Activated CD8-positive, alpha-beta memory T cell treated with anti-CD3 and anti-CD28 coated beads, Interleukin-2, amount 10 ng/mL, durations not matched to agents 7 days and 5 days (primary cell): ENCODE measurements at regions of chr1 and their contacts with region 1.

Region 1: DNA sequence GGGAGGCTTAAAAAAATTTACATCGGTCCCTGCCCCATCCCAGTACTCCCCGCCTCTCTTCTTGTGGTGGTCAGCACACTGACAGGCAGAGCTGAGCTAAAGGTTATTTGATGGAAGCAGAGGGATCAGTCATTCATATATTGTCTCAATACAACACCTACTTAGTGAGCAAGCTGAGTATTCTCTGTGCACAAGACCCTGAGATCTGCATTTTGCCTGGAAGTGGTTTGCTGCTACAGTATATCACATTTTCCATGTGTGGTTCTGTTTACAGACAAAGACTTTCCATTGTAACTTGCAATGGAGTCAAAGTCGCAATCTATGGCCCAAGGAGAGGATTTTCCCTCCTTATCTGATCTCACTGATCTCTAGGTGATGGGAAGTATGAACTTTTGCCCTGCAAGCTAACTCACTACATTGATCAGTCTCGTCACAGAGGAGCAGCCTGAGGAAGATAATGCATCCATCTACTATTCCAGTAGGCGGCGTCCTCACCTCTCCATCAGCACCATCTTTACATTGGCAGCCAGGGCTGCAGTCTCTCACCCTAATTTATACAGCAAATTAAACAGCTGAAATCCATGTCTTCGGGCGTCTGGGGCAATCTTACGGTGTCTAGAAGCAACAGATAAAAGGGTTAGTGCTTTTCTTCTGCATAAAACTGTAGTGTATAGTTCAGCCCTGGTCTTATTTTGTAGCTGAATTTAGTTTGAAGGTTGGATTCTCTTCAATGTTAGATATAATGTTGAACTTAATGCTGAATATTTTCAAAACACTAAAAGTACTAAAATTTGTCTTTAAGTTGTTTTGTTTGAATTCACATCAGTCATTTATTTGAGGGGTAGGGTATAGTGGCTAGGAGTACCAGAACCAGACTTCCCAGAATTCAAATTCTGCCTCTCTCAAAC is 3.2 kb upstream of the TRAF5 start:
- DNase-seq: peak; percentile 84
- ATAC-seq: peak; percentile 63
- H3K4me3 Mint-ChIP-seq: no peak overlapping the region
- H3K27ac Mint-ChIP-seq: no peak overlapping the region
- H3K4me1 Mint-ChIP-seq: peaks cover 43% of the 10 kb centered on the region
- H3K27me3 Mint-ChIP-seq: no peaks in the 10 kb centered on the region

Region 2: DNA sequence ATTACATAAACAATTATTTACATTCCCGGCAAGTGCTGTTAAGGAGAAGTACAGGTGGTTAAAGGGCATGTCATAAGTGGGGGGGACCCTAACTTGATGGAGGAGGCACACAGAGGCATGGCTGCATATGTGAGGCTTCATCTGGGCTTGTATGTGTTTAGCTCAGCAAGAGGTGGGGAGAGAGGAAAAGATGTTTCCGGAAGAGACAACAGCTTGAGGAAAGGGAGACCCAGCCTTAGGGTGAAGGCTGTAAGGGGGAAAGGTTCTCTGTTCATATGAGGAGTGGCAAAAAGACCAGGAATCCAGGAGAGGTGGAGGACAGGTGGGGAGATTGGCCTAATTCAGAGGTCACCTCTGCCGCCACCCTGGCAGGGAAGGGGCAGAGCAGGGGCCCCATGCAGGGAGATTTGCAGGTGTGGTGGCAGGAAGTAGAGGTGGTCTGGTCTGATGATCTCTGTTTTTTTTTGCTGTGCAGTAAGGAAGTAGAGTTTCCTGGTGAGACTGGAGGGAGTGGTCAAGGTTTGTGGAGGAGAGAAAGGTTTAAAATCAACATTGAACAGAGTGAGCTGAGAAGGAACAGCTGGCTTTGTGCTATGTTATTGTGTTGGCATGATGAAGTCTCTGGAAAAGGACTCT is 12.2 kb after region 1 on chr1:
- CTCF ChIA-PET with region 1: interaction called, 31 read pairs
- DNase-seq: peak; percentile 59
- ATAC-seq: peak; percentile 75
- H3K4me3 Mint-ChIP-seq: peak overlapping the region; percentile 64
- H3K27ac Mint-ChIP-seq: peak overlapping the region; percentile 92
- H3K4me1 Mint-ChIP-seq: peaks cover 82% of the 10 kb centered on the region
- H3K27me3 Mint-ChIP-seq: no peaks in the 10 kb centered on the region

Region 3: DNA sequence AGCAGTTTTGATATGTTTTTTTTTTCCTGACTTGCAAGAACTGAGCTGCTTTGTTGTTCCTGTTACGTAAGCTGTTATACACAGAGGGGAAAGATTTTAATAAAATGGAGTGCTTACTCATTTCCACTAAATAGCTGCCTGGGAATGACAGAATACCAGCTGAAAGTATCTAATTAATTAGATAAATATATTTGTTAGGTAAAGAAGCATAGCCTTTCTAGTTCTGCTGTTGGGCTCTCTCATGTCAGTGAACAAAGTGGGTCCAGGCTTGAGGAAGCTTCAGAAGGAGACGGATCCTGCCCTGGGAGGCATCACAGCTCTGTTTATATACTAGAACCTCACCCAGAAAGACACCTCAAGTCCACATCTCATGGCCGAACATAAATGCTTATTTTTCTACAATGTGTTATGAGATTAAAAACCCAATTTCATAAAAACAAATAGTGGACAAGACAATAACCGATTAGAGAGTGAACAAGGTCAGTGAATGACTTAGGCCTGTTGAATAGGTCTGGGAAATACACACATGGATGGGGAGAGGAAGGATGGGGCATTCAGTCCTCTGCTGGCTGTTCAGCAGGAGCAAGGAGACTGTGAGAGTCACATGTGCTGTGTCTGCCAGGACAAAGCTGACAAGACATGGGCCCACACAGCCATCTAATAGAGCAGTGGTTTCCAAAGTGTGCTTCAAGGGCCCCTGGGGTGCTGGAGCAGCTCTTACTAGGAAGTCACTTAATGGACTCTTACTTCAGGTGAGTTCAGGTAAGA is 23.9 kb after region 1 on chr1:
- CTCF ChIA-PET with region 1: interaction called, 13 read pairs
- DNase-seq: no peak
- ATAC-seq: no peak
- H3K4me3 Mint-ChIP-seq: no peak overlapping the region
- H3K27ac Mint-ChIP-seq: no peak overlapping the region
- H3K4me1 Mint-ChIP-seq: peaks cover 41% of the 10 kb centered on the region
- H3K27me3 Mint-ChIP-seq: no peaks in the 10 kb centered on the region

Region 4: GRCh38 chr1:211382714-211383480 is 59.5 kb after region 1 on chr1:
- CTCF ChIA-PET with region 1: interaction called, 11 read pairs
- DNase-seq: peak; percentile 90
- ATAC-seq: peak; percentile 95
- H3K4me3 Mint-ChIP-seq: peak overlapping the region; percentile 85
- H3K27ac Mint-ChIP-seq: peak overlapping the region; percentile 93
- H3K4me1 Mint-ChIP-seq: peaks cover 39% of the 10 kb centered on the region
- H3K27me3 Mint-ChIP-seq: peaks cover 4% of the 10 kb centered on the region

Region 5: GRCh38 chr1:211476200-211476849 is 152.9 kb after region 1 on chr1:
- CTCF ChIA-PET with region 1: interaction called, 44 read pairs
- DNase-seq: peak; percentile 89
- ATAC-seq: peak; percentile 91
- H3K4me3 Mint-ChIP-seq: no peak overlapping the region
- H3K27ac Mint-ChIP-seq: no peak overlapping the region
- H3K4me1 Mint-ChIP-seq: peaks cover 2% of the 10 kb centered on the region
- H3K27me3 Mint-ChIP-seq: peaks cover 32% of the 10 kb centered on the region

Region 6: DNA sequence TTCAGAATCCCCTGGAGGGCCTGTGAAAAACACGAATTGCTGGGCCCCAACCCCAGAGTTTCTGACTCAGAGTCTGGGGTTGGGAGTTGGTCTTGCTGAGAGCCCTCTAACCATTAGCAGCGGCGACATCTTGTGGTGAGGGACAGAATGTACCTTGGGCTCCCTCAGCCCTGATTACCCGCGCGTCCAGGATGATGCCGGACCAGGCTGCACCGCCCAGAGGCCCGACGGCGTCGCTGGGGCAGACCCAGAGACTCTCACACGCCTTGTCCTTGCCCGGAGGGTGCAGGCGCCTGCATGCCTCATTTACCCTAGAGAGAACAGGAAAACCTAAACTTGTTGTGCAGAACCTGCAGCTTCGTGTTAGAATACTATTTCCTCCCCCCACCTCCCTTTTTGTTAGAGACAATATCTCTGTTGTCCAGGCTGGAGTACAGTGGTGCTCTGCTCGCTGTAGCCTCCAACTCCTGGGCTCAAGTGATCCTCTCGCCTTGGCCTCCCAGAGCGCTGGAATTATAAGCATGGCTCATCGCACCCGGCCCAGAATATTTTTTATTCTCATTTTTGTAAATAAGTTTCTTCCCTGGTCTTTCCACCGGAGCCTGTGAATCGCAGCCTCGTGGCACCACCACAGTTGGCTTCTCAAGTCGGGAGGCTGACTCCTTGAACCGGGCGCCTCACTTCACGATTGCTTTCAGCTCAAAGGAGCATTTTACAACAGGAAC is 190.8 kb after region 1 on chr1:
- CTCF ChIA-PET with region 1: interaction called, 85 read pairs
- DNase-seq: peak; percentile 88
- ATAC-seq: peak; percentile 77
- H3K4me3 Mint-ChIP-seq: no peak overlapping the region
- H3K27ac Mint-ChIP-seq: no peak overlapping the region
- H3K4me1 Mint-ChIP-seq: peaks cover 33% of the 10 kb centered on the region
- H3K27me3 Mint-ChIP-seq: peaks cover 5% of the 10 kb centered on the region